Head of caudate nucleus (tissue), 42 donors: ENCODE measurements at regions of chr3 and their contacts with region 1.

Region 1: DNA sequence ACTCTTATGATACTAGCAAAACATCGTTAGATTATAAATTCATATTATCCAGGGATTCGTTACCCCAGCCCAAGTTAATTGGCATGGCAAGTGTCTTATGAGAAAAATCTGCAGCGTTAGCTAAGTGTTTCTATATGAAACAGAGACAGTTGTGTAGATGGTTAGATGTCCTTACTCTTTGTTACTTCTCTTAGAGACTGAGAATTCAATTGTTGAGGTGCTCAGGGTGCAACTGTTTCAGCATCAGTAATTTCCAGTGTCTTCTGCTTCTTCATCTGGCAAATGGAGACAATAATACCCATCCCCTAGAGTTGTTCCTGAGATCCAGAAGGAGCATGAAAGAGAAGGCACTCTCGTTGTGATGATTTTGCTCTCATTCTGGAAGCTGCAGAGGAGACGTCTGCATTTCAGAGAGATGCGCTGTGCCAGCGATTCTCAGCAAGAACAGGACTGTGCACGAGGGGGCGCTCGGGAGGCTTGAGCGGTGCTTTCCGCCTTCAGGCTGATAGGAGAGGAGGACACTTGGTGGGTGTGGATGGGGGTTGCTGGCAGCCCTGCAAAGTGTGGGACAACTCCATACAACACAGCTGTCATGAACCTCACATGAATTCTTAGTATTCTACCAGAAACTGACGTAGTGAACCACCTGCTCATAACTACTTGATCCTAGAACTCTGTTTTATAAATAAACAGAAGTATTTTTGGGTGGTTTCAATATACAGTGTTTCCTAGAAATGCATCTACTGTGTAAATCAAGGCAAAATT is 39.7 kb upstream of the SPSB4 start:
- DNase-seq: peak; percentile 65 to 92 (median 86)

Region 2: GRCh38 chr3:141056491-141057171 is 45.2 kb after region 1 on chr3:
- intact Hi-C with region 1: no loop called
- DNase-seq: peak in 39 of 42 donors; percentile 32 to 84 (median 64)

Region 3: GRCh38 chr3:141105828-141106628 is 94.6 kb after region 1 on chr3:
- intact Hi-C with region 1: loop called (anchors 10 kb)
- DNase-seq: peak in 39 of 42 donors; percentile 21 to 92 (median 77)

Region 4: GRCh38 chr3:141184430-141184829 is 173.0 kb after region 1 on chr3:
- intact Hi-C with region 1: loop called (anchors 5 kb)
- DNase-seq: no peak